Stomach (tissue), 19 donors: ENCODE measurements at regions of chr17 and their contacts with region 1.

Region 1: DNA sequence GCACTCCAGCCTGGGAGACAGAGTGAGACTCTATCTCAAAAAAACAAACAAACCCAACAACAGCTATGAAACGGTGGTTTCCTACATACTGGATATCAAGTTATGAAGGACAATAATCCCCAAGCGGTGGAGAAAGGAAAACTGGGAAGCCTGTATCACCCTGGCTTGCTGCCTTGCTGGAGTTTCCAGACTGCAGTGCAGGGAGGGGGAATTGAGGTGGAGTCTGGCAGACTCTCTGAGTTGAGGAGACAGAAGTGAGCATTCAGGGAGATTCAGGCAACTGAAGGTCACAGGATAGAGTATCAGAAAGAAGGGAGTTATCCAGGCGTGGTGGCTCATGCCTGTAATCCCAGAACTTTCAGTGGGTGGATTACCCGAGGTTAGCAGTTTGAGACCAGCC is 11.9 kb downstream of the QRICH2 start:
- DNase-seq: no peak
- H3K4me3 ChIP-seq: no peak overlapping the region
- H3K27ac ChIP-seq: no peak overlapping the region
- H3K4me1 ChIP-seq: no peaks in the 10 kb centered on the region
- H3K27me3 ChIP-seq: no peaks in the 10 kb centered on the region
- CTCF ChIP-seq: no peak
- EP300 ChIP-seq: no peak
- POLR2A ChIP-seq: no peak

Region 2: DNA sequence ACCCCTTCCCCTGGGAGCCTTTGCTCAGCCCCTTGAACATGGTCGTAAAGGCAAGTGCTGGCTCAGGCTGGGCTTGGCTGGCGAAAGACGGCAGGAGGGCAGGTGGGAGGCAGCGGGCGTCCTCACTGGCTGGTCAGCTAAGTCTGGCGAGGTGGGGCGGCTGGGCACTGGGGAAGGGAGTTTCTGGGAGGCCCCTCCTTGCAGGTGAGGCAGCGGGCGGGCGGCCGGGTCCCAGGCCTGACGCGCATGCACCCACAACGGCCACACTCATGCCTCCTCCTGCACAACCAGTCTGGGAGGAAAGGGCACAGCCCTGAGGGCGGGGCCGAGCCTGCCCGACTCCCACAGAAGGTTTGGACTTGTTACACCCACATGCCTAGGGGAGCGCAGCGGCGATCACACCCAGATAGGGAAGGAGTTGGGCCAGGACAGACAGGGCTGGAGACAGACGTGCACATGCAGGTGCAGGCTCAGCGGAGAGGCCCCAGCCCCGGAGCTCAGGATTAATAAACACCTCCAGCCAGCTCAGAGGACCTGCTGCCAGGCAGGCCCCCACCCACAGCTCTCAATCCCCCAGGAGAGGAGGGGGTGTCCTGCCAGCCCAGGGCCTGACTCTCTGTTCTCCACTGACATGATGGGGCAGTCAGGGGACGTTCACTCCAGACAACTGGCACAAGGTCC is 268.9 kb before region 1 on chr17 and contains the start of gene EVPL:
- intact Hi-C with region 1: loop called (anchors 10 kb)
- DNase-seq: peak; percentile 88 to 90
- H3K4me3 ChIP-seq: peak within 1 kb of the TSS; percentile 29 to 48 (median 42)
- H3K27ac ChIP-seq: peak within 1 kb of the TSS; percentile 26 to 77 (median 60)
- H3K4me1 ChIP-seq: peaks cover 6 to 32% (median 18%) of the 10 kb centered on the region in 4 donors
- H3K27me3 ChIP-seq: peaks cover 0 to 3% (median 0%) of the 10 kb centered on the region in 3 donors
- CTCF ChIP-seq: no peak
- EP300 ChIP-seq: no peak
- POLR2A ChIP-seq: no peak
- total RNA-seq, gene EVPL: 1.2 to 89.8 (median 9.7) TPM